T-cell (primary cell): ENCODE measurements at regions of chr1 and their contacts with region 1.

Region 1: GRCh38 chr1:39462074-39462473 is 29.4 kb upstream of the BMP8A start:
- DNase-seq: no peak
- ATAC-seq: no peak
- H3K4me3 ChIP-seq: no peak overlapping the region
- H3K4me3 Mint-ChIP-seq: no peak overlapping the region
- H3K27ac ChIP-seq: no peak overlapping the region
- H3K27ac Mint-ChIP-seq: no peak overlapping the region
- H3K4me1 ChIP-seq: no peaks in the 10 kb centered on the region
- H3K4me1 Mint-ChIP-seq: no peaks in the 10 kb centered on the region
- H3K27me3 ChIP-seq: no peaks in the 10 kb centered on the region
- H3K27me3 Mint-ChIP-seq: no peaks in the 10 kb centered on the region

Region 2: GRCh38 chr1:39370602-39371001 is 91.5 kb before region 1 on chr1:
- CTCF ChIA-PET with region 1: no interaction called
- POLR2A ChIA-PET with region 1: interaction called in 1 of 2 experiments, 10 read pairs
- DNase-seq: no peak
- ATAC-seq: no peak
- H3K4me3 ChIP-seq: no peak overlapping the region
- H3K4me3 Mint-ChIP-seq: no peak overlapping the region
- H3K27ac ChIP-seq: no peak overlapping the region
- H3K27ac Mint-ChIP-seq: no peak overlapping the region
- H3K4me1 ChIP-seq: no peaks in the 10 kb centered on the region
- H3K4me1 Mint-ChIP-seq: no peaks in the 10 kb centered on the region
- H3K27me3 ChIP-seq: no peaks in the 10 kb centered on the region
- H3K27me3 Mint-ChIP-seq: no peaks in the 10 kb centered on the region

Region 3: DNA sequence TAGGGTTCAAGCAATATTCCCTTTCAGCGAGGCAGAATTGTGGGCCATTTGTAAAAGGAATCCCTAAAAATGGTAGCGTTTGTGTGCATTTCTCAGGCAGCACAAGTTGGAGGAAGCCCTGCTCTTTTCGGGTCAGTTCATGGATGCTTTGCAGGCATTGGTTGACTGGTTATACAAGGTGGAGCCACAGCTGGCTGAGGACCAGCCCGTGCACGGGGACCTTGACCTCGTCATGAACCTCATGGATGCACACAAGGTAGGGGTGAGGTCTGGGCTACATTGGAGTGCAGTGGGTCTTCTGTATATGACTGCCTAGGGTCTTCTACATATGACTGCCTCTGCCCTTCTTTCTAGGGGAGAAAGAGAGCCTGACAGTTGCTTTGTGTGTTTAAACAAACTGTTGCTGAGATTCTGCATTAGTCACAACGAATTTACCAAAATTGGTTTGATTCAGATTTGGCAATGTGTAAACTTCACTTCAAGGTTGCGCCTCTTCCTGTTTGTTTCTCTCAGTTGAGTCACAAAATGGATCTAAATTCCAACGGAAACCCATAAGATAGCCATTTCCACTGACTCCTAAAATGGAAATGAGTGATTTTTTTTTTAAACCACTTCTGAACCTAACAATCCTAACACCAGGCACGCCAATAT is 11.0 kb before region 1 on chr1:
- CTCF ChIA-PET with region 1: no interaction called
- POLR2A ChIA-PET with region 1: no interaction called
- DNase-seq: no peak
- ATAC-seq: no peak
- H3K4me3 ChIP-seq: no peak overlapping the region
- H3K4me3 Mint-ChIP-seq: no peak overlapping the region
- H3K27ac ChIP-seq: no peak overlapping the region
- H3K27ac Mint-ChIP-seq: peak overlapping the region in 1 of 2 donors; percentile 35
- H3K4me1 ChIP-seq: no peaks in the 10 kb centered on the region
- H3K4me1 Mint-ChIP-seq: no peaks in the 10 kb centered on the region
- H3K27me3 ChIP-seq: no peaks in the 10 kb centered on the region
- H3K27me3 Mint-ChIP-seq: no peaks in the 10 kb centered on the region